Ascending aorta (tissue), 2 donors: ENCODE measurements at regions of chr14 and their contacts with region 1.

Region 1: GRCh38 chr14:77707724-77708408 is at the starts of genes ALKBH1 and SLIRP:
- DNase-seq: peak; percentile 52 to 93
- H3K4me3 ChIP-seq: peak within 1 kb of the TSS; percentile 66 to 88
- H3K27ac ChIP-seq: peak within 1 kb of the TSS; percentile 13 to 45
- H3K4me1 ChIP-seq: peaks cover 12 to 20% of the 10 kb centered on the region in 2 donors
- H3K27me3 ChIP-seq: no peaks in the 10 kb centered on the region
- CTCF ChIP-seq: no peak
- total RNA-seq, gene ALKBH1: 14.5 TPM
- total RNA-seq, gene SLIRP: 3.1 TPM

Region 2: DNA sequence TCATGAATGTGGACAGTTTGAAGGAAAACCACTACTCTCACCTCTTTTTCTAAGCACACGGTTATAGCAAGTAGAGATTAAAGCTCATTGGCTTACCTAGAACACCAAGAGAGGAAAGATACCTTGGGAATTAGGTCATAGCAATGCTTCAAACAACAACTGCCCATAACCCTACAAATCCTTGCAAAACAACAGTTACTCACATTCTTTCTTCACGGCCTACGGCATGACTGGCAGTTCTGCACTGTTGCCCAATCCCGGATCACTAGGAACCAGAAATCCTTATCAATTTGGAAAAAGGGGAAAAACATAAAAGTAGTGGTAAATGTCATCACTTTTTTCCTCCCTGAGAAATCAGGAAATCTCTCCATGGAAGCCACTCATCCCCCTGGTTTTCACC is 199.6 kb before region 1 on chr14:
- intact Hi-C with region 1: no loop called
- DNase-seq: no peak
- H3K4me3 ChIP-seq: no peak overlapping the region
- H3K27ac ChIP-seq: no peak overlapping the region
- H3K4me1 ChIP-seq: no peaks in the 10 kb centered on the region
- H3K27me3 ChIP-seq: no peaks in the 10 kb centered on the region
- CTCF ChIP-seq: no peak

Region 3: DNA sequence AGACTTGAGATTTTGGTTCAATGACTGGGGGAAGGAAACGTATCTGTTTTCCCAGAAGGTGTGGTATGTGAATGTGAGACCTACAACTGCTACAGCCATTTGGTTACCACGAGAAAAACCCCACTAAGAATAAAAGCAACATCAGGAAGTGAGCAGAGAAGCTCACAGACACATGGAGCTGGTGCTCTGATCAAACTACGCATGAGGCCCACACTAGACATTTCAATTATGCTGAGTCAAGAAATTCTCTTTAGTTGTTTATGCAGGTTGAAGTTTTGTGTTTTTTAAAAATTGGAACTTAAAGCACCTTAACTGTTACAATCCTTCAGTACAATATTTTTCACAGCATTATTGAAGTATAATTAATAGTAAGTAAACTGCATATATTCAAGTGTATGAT is 82.5 kb before region 1 on chr14:
- intact Hi-C with region 1: no loop called
- DNase-seq: no peak
- H3K4me3 ChIP-seq: no peak overlapping the region
- H3K27ac ChIP-seq: no peak overlapping the region
- H3K4me1 ChIP-seq: no peaks in the 10 kb centered on the region
- H3K27me3 ChIP-seq: no peaks in the 10 kb centered on the region
- CTCF ChIP-seq: no peak

Region 4: DNA sequence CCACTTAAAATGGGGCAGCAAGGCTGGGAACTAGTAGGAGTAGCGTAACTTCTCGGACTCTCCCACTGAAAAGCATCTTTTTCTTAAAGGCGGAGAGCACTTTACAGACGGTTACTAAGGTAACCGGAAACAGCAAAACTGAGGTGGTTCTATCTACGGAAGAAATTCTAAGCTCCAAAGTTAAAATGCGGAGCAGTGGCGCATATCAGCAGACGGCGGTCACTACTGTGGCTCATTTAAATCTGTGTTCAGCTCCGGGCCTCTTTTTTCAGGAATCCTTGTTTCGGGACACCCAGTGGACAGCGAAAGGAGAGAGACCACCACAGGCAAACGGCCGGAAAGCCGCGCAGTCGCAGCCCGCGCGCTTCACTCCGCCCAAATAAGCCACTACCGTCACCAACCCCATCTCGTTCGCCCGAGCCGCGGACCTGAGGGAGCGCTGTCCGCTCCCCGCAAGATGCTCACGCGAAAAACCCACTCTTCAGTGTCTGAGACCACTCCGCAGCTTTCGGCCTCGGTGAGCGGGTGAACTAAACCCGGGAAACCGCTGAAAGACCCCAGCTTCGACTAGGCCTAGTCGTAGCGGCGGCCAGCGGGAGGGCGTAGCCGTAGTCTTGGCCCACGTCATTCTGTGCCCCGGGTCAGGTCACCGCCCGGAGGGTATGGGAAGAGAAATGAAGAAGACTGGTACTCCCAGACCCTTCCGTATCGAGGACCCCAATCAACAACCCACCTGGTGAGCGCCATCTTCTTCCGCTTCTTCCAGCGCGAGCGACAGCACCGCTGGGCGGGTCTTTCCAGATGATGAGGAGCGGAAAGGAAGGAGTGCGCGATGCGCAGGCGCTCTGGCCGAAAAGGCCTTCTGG is 52.7 kb after region 1 on chr14 and contains the start of gene SNW1:
- intact Hi-C with region 1: loop called (anchors 1 kb)
- DNase-seq: peak; percentile 84 to 96
- H3K4me3 ChIP-seq: peak within 1 kb of the TSS; percentile 71 to 99
- H3K27ac ChIP-seq: peak within 1 kb of the TSS; percentile 92 to 99
- H3K4me1 ChIP-seq: peaks cover 19% of the 10 kb centered on the region in 2 donors
- H3K27me3 ChIP-seq: no peaks in the 10 kb centered on the region
- CTCF ChIP-seq: no peak
- total RNA-seq, gene SNW1: 16.8 TPM

Region 5: GRCh38 chr14:77799863-77800730 is 92.2 kb after region 1 on chr14 and contains the start of gene ADCK1:
- intact Hi-C with region 1: loop called (anchors 1 kb)
- DNase-seq: peak; percentile 74 to 95
- H3K4me3 ChIP-seq: peak within 1 kb of the TSS; percentile 91 to 98
- H3K27ac ChIP-seq: peak within 1 kb of the TSS; percentile 87 to 94
- H3K4me1 ChIP-seq: peaks cover 0 to 3% of the 10 kb centered on the region in 2 donors
- H3K27me3 ChIP-seq: no peaks in the 10 kb centered on the region
- CTCF ChIP-seq: peak; percentile 36 to 52 (median 37)
- total RNA-seq, gene ADCK1: 0.43 TPM